ENCODE measurements at regions of chr12 and their contacts with region 1.

Region 1: DNA sequence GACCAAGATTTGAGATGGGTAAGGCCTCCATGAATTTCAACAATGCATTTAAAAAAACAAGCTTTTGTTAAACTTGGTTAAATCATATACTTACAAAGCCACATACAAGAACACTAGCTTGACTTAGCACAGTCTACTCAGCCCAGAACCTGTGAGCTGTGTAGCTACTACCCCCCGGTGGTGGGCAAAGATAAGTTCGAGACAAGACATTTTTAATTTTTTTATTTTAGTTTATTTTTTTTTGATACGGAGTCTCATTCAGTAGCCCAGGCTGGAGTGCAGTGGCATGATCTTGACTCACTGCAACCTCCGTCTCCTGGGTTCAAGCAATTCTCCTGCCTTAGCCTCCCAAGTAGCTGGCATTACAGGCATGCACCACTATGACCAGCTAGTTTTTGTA is 3.7 kb upstream of the NECAP1 start:
- DNase-seq: peak; percentile 44 to 89 (median 59)
- ATAC-seq: peak; percentile 28
- H3K4me3 ChIP-seq: no peak overlapping the region
- H3K4me3 Mint-ChIP-seq: peak overlapping the region; percentile 22
- H3K27ac ChIP-seq: no peak overlapping the region
- H3K27ac Mint-ChIP-seq: peak overlapping the region; percentile 98
- H3K4me1 ChIP-seq: peaks cover 16% of the 10 kb centered on the region
- H3K4me1 Mint-ChIP-seq: peaks cover 54% of the 10 kb centered on the region
- H3K27me3 ChIP-seq: no peaks in the 10 kb centered on the region
- H3K27me3 Mint-ChIP-seq: no peaks in the 10 kb centered on the region
- CTCF ChIP-seq: peak; percentile 70

Region 2: GRCh38 chr12:7748852-7749251 is 329.5 kb before region 1 on chr12:
- CTCF ChIA-PET with region 1: no interaction called
- POLR2A ChIA-PET with region 1: no interaction called
- intact Hi-C with region 1: no loop called
- DNase-seq: no peak
- ATAC-seq: no peak
- H3K4me3 ChIP-seq: no peak overlapping the region
- H3K4me3 Mint-ChIP-seq: no peak overlapping the region
- H3K27ac ChIP-seq: no peak overlapping the region
- H3K27ac Mint-ChIP-seq: no peak overlapping the region
- H3K4me1 ChIP-seq: no peaks in the 10 kb centered on the region
- H3K4me1 Mint-ChIP-seq: no peaks in the 10 kb centered on the region
- H3K27me3 ChIP-seq: no peaks in the 10 kb centered on the region
- H3K27me3 Mint-ChIP-seq: no peaks in the 10 kb centered on the region
- CTCF ChIP-seq: no peak

Region 3: DNA sequence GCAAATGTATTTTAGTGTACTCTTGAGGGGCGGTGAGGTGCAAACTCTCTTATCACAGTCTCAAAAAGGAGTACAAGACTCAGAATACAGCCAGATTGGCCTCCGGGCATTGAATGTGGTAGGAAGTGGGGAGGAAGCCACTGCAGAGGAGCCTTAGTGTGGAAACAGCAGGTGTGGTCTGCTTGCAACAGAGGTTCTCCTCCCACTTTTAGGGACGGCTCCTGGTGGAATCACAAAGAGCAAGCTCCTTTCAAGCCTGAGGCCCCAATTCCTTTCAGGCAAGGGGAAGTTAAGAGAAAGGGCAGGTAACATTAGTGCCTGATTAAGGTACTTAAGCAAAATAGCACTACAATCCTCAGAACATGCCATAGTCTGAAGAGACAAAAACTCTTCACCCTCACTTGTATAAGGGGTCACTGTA is 118.7 kb before region 1 on chr12:
- CTCF ChIA-PET with region 1: interaction called, 4 read pairs
- POLR2A ChIA-PET with region 1: interaction called, 10 read pairs
- intact Hi-C with region 1: no loop called
- DNase-seq: peak in 13 of 14 experiments; percentile 22 to 77 (median 37)
- ATAC-seq: peak; percentile 24
- H3K4me3 ChIP-seq: peak overlapping the region; percentile 64
- H3K4me3 Mint-ChIP-seq: peak overlapping the region; percentile 87
- H3K27ac ChIP-seq: peak overlapping the region; percentile 59 to 76
- H3K27ac Mint-ChIP-seq: peak overlapping the region; percentile 90
- H3K4me1 ChIP-seq: peaks cover 23% of the 10 kb centered on the region
- H3K4me1 Mint-ChIP-seq: peaks cover 34% of the 10 kb centered on the region
- H3K27me3 ChIP-seq: no peaks in the 10 kb centered on the region
- H3K27me3 Mint-ChIP-seq: no peaks in the 10 kb centered on the region
- CTCF ChIP-seq: no peak

Region 4: GRCh38 chr12:8032242-8033152 is 45.9 kb before region 1 on chr12 and contains the start of gene FOXJ2:
- CTCF ChIA-PET with region 1: interaction called, 37 read pairs
- POLR2A ChIA-PET with region 1: interaction called, 18 read pairs
- intact Hi-C with region 1: loop called in 1 of 2 experiments (anchors 2 kb)
- DNase-seq: peak; percentile 68 to 91 (median 82)
- ATAC-seq: peak; percentile 83
- H3K4me3 ChIP-seq: peak within 1 kb of the TSS; percentile 99
- H3K4me3 Mint-ChIP-seq: peak within 1 kb of the TSS; percentile 94
- H3K27ac ChIP-seq: peak within 1 kb of the TSS; percentile 79 to 92
- H3K27ac Mint-ChIP-seq: peak within 1 kb of the TSS; percentile 96
- H3K4me1 ChIP-seq: peaks cover 62% of the 10 kb centered on the region
- H3K4me1 Mint-ChIP-seq: peaks cover 51% of the 10 kb centered on the region
- H3K27me3 ChIP-seq: no peaks in the 10 kb centered on the region
- H3K27me3 Mint-ChIP-seq: no peaks in the 10 kb centered on the region
- CTCF ChIP-seq: no peak
- total RNA-seq, gene FOXJ2: 36.3 to 38.5 TPM

Region 5: GRCh38 chr12:8045952-8046944 is 32.1 kb before region 1 on chr12:
- CTCF ChIA-PET with region 1: interaction called, 68 read pairs
- POLR2A ChIA-PET with region 1: interaction called, 11 read pairs
- intact Hi-C with region 1: loop called (anchors 1 kb)
- DNase-seq: peak; percentile 71 to 92 (median 82)
- ATAC-seq: peak; percentile 90
- H3K4me3 ChIP-seq: no peak overlapping the region
- H3K4me3 Mint-ChIP-seq: no peak overlapping the region
- H3K27ac ChIP-seq: no peak overlapping the region
- H3K27ac Mint-ChIP-seq: no peak overlapping the region
- H3K4me1 ChIP-seq: no peaks in the 10 kb centered on the region
- H3K4me1 Mint-ChIP-seq: peaks cover 10% of the 10 kb centered on the region
- H3K27me3 ChIP-seq: no peaks in the 10 kb centered on the region
- H3K27me3 Mint-ChIP-seq: no peaks in the 10 kb centered on the region
- CTCF ChIP-seq: peak; percentile 97

Region 6: GRCh38 chr12:8065991-8066594 is 12.3 kb before region 1 on chr12 and contains the start of gene C3AR1:
- CTCF ChIA-PET with region 1: interaction called, 25 read pairs
- POLR2A ChIA-PET with region 1: interaction called, 14 read pairs
- intact Hi-C with region 1: loop called in 1 of 2 experiments (anchors 1 kb)
- DNase-seq: peak in 13 of 14 experiments; percentile 16 to 88 (median 47)
- ATAC-seq: peak; percentile 97
- H3K4me3 ChIP-seq: peak within 1 kb of the TSS; percentile 19
- H3K4me3 Mint-ChIP-seq: peak within 1 kb of the TSS; percentile 47
- H3K27ac ChIP-seq: peak within 1 kb of the TSS; percentile 47 to 48
- H3K27ac Mint-ChIP-seq: peak within 1 kb of the TSS; percentile 91
- H3K4me1 ChIP-seq: peaks cover 23% of the 10 kb centered on the region
- H3K4me1 Mint-ChIP-seq: peaks cover 32% of the 10 kb centered on the region
- H3K27me3 ChIP-seq: no peaks in the 10 kb centered on the region
- H3K27me3 Mint-ChIP-seq: no peaks in the 10 kb centered on the region
- CTCF ChIP-seq: no peak
- total RNA-seq, gene C3AR1: 1.4 TPM